IMR-90 (cell line): ENCODE measurements at regions of chr17 and their contacts with region 1.

Region 1: GRCh38 chr17:30278032-30278431 is 13.7 kb downstream of the BLMH start:
- DNase-seq: peak; percentile 69
- ATAC-seq: peak; percentile 61; the same call in 1 of the 2 replicates
- H3K4me3 ChIP-seq: no peak overlapping the region
- H3K27ac ChIP-seq: no peak overlapping the region
- H3K4me1 ChIP-seq: no peaks in the 10 kb centered on the region; the same call in 1 of the 2 replicates
- H3K27me3 ChIP-seq: no peaks in the 10 kb centered on the region
- CTCF ChIP-seq: peak; percentile 59
- POLR2A ChIP-seq: no peak
- RAD21 ChIP-seq: peak; percentile 69

Region 2: GRCh38 chr17:29273924-29274323 is 1004.1 kb before region 1 on chr17:
- CTCF ChIA-PET with region 1: no interaction called
- POLR2A ChIA-PET with region 1: no interaction called
- dilution Hi-C with region 1: no loop called
- in situ Hi-C with region 1: no loop called
- intact Hi-C with region 1: no loop called
- DNase-seq: no peak
- ATAC-seq: no peak
- H3K4me3 ChIP-seq: no peak overlapping the region
- H3K27ac ChIP-seq: no peak overlapping the region
- H3K4me1 ChIP-seq: peaks cover 5% of the 10 kb centered on the region
- H3K27me3 ChIP-seq: no peaks in the 10 kb centered on the region
- CTCF ChIP-seq: no peak
- POLR2A ChIP-seq: no peak
- RAD21 ChIP-seq: no peak

Region 3: DNA sequence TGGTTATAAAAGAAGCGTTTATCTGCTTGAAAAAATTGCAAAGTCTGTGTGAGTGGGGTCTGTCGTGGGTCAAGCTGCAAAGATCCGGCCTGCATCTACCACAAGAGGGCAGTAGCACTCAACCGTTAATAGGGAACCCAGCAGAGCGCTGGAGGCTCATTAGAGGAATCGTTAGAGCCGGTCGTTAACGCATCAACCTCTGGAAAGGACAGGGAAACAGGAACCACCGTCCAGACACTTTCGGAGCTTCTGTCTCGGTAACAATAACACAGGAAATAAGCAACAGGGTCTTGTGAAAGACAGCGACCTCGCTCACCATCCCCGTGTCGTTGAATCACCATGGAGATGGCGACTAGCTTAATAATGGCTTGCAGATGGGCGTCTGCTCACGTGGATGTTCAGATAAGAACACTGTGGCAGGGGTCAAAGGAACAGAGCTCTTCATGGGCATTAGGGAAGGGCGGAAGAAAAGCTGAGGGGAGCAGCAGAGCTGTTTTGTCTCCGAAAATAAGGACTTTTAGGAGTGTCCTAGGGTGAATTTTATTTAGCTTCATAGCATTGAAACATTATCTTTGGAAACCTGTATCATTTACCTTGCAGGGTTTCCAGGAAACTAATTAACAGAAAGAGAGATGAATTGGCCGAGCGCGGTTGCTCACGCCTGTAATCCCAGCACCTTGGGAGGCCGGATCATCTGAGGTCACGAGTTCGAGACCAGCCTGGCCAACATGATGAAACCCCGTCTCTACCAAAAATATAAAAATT is 173.3 kb before region 1 on chr17:
- CTCF ChIA-PET with region 1: interaction called, 4 read pairs
- POLR2A ChIA-PET with region 1: no interaction called
- dilution Hi-C with region 1: no loop called
- in situ Hi-C with region 1: no loop called
- intact Hi-C with region 1: loop called (anchors 1 kb)
- DNase-seq: peak; percentile 75
- ATAC-seq: peak; percentile 99
- H3K4me3 ChIP-seq: peak overlapping the region; percentile 50
- H3K27ac ChIP-seq: no peak overlapping the region
- H3K4me1 ChIP-seq: no peaks in the 10 kb centered on the region
- H3K27me3 ChIP-seq: peaks cover 14% of the 10 kb centered on the region
- CTCF ChIP-seq: peak; percentile 87
- POLR2A ChIP-seq: no peak
- RAD21 ChIP-seq: peak; percentile 77

Region 4: GRCh38 chr17:30116661-30117551 is 161.1 kb before region 1 on chr17 and contains the start of gene NSRP1:
- CTCF ChIA-PET with region 1: no interaction called
- POLR2A ChIA-PET with region 1: no interaction called
- dilution Hi-C with region 1: no loop called
- in situ Hi-C with region 1: loop called (anchors 5 kb)
- intact Hi-C with region 1: no loop called
- DNase-seq: peak; percentile 96
- ATAC-seq: peak; percentile 97
- H3K4me3 ChIP-seq: peak within 1 kb of the TSS; percentile 84
- H3K27ac ChIP-seq: peak within 1 kb of the TSS; percentile 97
- H3K4me1 ChIP-seq: no peaks in the 10 kb centered on the region
- H3K27me3 ChIP-seq: no peaks in the 10 kb centered on the region
- CTCF ChIP-seq: no peak
- POLR2A ChIP-seq: peak; percentile 98
- RAD21 ChIP-seq: no peak
- total RNA-seq, gene NSRP1: 3.4 and 5.8 TPM in 2 replicates

Region 5: GRCh38 chr17:30124273-30124796 is 153.7 kb before region 1 on chr17:
- CTCF ChIA-PET with region 1: interaction called, 4 read pairs
- POLR2A ChIA-PET with region 1: no interaction called
- dilution Hi-C with region 1: no loop called
- in situ Hi-C with region 1: loop called (anchors 5 kb)
- intact Hi-C with region 1: loop called (anchors 1 kb)
- DNase-seq: no peak
- ATAC-seq: no peak
- H3K4me3 ChIP-seq: no peak overlapping the region
- H3K27ac ChIP-seq: no peak overlapping the region
- H3K4me1 ChIP-seq: no peaks in the 10 kb centered on the region
- H3K27me3 ChIP-seq: no peaks in the 10 kb centered on the region
- CTCF ChIP-seq: no peak
- POLR2A ChIP-seq: no peak
- RAD21 ChIP-seq: no peak

Region 6: GRCh38 chr17:30187573-30187972 is 90.5 kb before region 1 on chr17:
- CTCF ChIA-PET with region 1: no interaction called
- POLR2A ChIA-PET with region 1: no interaction called
- dilution Hi-C with region 1: no loop called
- in situ Hi-C with region 1: no loop called
- intact Hi-C with region 1: loop called (anchors 5 kb)
- DNase-seq: no peak
- ATAC-seq: no peak
- H3K4me3 ChIP-seq: no peak overlapping the region
- H3K27ac ChIP-seq: no peak overlapping the region
- H3K4me1 ChIP-seq: no peaks in the 10 kb centered on the region
- H3K27me3 ChIP-seq: no peaks in the 10 kb centered on the region
- CTCF ChIP-seq: no peak
- POLR2A ChIP-seq: no peak
- RAD21 ChIP-seq: no peak

Region 7: GRCh38 chr17:30449480-30449879 is 171.4 kb after region 1 on chr17:
- CTCF ChIA-PET with region 1: no interaction called
- POLR2A ChIA-PET with region 1: no interaction called
- dilution Hi-C with region 1: no loop called
- in situ Hi-C with region 1: no loop called
- intact Hi-C with region 1: no loop called
- DNase-seq: peak; percentile 10
- ATAC-seq: no peak
- H3K4me3 ChIP-seq: no peak overlapping the region
- H3K27ac ChIP-seq: no peak overlapping the region
- H3K4me1 ChIP-seq: no peaks in the 10 kb centered on the region; the same call in 1 of the 2 replicates
- H3K27me3 ChIP-seq: no peaks in the 10 kb centered on the region
- CTCF ChIP-seq: no peak
- POLR2A ChIP-seq: no peak
- RAD21 ChIP-seq: no peak